Activated CD8-positive, alpha-beta T cell treated with anti-CD3 and anti-CD28 coated beads for 36 hours (primary cell): ENCODE measurements at regions of chr5 and their contacts with region 1.

Region 1: GRCh38 chr5:179763215-179763945 is 30.4 kb upstream of the LTC4S start:
- DNase-seq: peak; percentile 74
- ATAC-seq: peak; percentile 60
- H3K4me3 Mint-ChIP-seq: no peak overlapping the region
- H3K27ac Mint-ChIP-seq: no peak overlapping the region
- H3K4me1 Mint-ChIP-seq: peaks cover 54% of the 10 kb centered on the region
- H3K27me3 Mint-ChIP-seq: no peaks in the 10 kb centered on the region
- CTCF ChIP-seq: peak; percentile 99

Region 2: DNA sequence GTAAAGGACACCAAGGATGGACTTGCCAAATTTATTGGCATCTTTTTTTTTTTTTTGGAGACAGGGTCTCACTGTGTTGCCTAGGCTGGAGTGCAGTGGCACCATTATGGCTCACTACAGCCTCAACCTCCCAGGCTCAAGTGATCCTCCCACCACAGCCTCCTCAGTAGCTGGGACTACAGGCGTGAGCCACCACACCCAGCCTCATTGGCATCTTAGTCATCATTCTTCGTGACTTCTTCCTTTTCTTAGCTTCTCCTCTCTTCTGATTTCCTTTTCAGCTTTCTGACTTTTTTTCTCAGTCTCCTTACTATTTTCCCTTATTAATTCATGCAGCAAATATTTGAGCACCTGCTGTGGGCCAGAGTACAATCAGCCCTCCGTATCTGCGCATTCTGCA is 24.6 kb before region 1 on chr5:
- CTCF ChIA-PET with region 1: interaction called, 30 read pairs
- POLR2A ChIA-PET with region 1: interaction called, 3 read pairs
- intact Hi-C with region 1: no loop called
- DNase-seq: no peak
- ATAC-seq: no peak
- H3K4me3 Mint-ChIP-seq: no peak overlapping the region
- H3K27ac Mint-ChIP-seq: peak overlapping the region; percentile 27
- H3K4me1 Mint-ChIP-seq: peaks cover 53% of the 10 kb centered on the region
- H3K27me3 Mint-ChIP-seq: no peaks in the 10 kb centered on the region
- CTCF ChIP-seq: no peak

Region 3: DNA sequence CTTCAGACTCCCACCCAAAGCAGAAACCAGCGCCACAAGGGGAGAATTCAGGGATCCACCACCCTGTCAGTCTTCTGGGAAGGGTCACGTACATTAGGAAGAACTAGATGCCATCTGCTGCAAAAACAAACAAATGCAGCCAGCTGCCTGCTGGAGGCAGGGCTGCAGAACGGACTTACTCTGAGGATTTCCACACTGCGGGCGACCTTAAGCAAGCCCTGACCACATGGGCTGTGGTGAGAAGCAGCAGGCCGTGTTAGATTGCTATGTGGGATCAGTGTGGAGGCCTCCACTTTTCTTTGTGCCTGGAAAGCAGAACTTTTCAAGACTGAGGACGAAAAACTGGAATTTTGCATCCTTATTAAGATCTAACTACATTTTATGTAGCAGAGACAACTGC is 17.0 kb after region 1 on chr5:
- CTCF ChIA-PET with region 1: interaction called, 28 read pairs
- POLR2A ChIA-PET with region 1: no interaction called
- intact Hi-C with region 1: no loop called
- DNase-seq: no peak
- ATAC-seq: no peak
- H3K4me3 Mint-ChIP-seq: no peak overlapping the region
- H3K27ac Mint-ChIP-seq: no peak overlapping the region
- H3K4me1 Mint-ChIP-seq: no peaks in the 10 kb centered on the region
- H3K27me3 Mint-ChIP-seq: no peaks in the 10 kb centered on the region
- CTCF ChIP-seq: no peak

Region 4: DNA sequence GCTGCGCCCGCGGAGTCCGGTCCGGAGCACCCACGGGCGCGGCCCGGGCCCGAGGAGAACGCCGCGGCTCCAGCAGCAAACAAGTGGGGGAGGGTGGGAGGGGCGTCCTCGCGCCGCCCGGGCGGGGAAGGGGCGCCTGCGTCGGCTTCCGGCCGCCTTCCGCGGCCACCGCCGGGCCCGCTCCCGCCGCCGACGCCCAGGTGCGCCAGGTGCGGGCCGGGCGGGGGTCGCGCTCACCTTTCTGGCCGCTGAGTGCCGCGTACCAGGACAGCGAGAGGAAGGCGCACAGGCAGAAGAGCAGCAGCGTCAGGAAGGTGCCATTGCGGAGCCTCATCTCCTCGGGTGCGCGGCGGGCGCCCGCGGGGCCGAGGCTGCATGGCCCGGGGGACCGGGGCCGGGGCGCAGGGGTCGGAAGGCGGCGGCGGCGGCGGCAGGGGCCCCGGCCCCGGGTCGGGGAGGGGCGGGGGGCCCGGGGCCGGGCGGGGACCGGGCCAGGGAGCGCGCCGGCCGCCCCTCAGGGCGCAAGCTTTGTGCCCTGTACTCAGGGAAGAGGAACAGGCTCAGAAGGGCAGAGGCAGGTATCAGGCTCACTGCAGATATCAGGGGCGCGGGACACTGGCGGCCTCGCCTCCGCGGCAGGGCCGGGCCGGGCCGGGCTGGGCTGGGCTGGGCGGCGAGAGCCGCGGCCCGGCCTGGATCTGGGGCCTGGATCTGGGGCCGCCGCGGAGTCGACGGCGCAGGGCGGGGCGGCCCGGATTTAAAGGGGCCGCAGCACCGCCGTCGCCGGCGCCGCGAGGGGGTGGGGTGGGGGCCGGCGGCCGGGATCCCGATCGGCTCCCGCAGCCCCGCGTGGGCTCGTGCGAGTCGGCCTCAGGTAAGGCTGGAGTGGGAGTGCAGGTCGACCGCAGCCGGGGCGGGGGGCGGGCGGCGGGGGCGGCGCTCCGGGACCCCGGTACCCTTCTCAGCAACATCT is 43.2 kb after region 1 on chr5 and contains the start of gene MGAT4B:
- CTCF ChIA-PET with region 1: interaction called, 12 read pairs
- POLR2A ChIA-PET with region 1: interaction called, 3 read pairs
- intact Hi-C with region 1: loop called (anchors 5 kb)
- DNase-seq: peak; percentile 65
- ATAC-seq: peak; percentile 64
- H3K4me3 Mint-ChIP-seq: peak within 1 kb of the TSS; percentile 85
- H3K27ac Mint-ChIP-seq: peak within 1 kb of the TSS; percentile 72
- H3K4me1 Mint-ChIP-seq: peaks cover 27% of the 10 kb centered on the region
- H3K27me3 Mint-ChIP-seq: no peaks in the 10 kb centered on the region
- CTCF ChIP-seq: no peak
- total RNA-seq, gene MGAT4B: 62.8 to 65.9 TPM

Region 5: GRCh38 chr5:180059326-180059725 is 295.9 kb after region 1 on chr5:
- CTCF ChIA-PET with region 1: no interaction called
- POLR2A ChIA-PET with region 1: no interaction called
- intact Hi-C with region 1: no loop called
- DNase-seq: no peak
- ATAC-seq: no peak
- H3K4me3 Mint-ChIP-seq: no peak overlapping the region
- H3K27ac Mint-ChIP-seq: no peak overlapping the region
- H3K4me1 Mint-ChIP-seq: no peaks in the 10 kb centered on the region
- H3K27me3 Mint-ChIP-seq: no peaks in the 10 kb centered on the region
- CTCF ChIP-seq: no peak